ENCODE measurements at regions of chr10 and their contacts with region 1.

Region 1: DNA sequence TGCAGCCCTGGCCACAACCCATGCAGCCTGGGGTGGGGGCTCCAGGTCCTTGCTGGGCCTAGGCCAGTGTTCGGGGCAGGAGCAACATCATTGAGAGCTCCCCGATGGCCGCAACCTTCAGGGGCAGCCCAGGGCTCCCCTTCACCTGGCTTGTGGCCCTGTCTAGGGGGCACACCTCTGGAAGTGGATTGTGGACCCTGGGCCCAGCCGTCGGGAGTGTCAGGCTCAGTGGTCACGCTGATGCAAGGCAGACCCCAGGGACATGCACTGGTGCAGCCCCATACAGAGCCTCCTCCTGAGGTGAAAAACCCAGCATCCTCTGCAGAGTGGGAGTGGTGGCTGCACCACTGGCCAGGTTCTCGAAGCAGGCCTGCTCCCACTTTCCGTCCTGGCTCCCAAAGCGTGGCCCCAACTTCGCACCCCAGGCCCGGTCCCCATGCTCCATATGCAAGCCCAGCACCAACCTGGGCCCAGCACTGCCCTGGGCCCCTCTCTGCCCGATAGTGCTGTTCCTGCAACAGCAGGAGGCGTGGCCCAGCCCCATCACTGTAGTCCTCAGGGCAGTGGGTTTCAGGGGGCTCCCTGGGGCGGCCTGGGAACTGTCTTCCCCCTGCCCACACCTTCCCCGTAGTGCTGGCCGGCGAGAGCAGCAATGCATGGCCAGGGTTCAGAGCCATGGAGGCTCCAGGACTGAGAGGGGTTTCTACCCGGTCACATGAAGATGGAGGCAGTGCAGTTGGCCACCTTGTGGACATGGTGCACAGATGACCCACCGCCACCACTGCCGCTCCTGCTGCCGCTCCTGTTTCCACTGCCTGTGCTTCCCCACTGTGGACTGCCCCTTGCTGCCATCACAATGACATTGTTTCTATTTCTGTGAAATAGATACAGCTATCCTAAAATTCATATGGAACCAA is 303.9 kb upstream of the NRG3 start:
- DNase-seq: no peak
- H3K4me3 ChIP-seq: no peak overlapping the region
- H3K27ac ChIP-seq: no peak overlapping the region
- H3K4me1 ChIP-seq: no peaks in the 10 kb centered on the region
- H3K27me3 ChIP-seq: no peaks in the 10 kb centered on the region
- CTCF ChIP-seq: no peak
- POLR2A ChIP-seq: no peak

Region 2: DNA sequence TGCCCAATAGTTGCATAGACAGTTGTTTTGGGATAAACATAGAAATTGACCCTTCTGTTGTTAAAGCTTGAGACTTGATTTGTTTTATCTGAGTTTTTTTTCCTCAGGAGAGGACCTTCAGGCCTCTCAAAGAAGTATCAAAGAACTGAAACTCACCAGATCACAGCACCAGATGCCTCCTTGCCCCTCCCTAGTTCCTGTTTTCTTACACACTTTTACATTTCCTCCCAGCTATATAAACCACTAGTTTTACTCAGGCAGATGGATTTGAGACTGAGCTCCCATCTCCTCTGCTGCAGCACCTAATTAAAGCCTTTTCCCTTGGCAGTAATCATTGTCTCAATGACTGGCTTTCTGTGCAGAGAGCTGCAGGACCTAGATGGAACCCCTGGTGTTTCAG is 153.3 kb after region 1 on chr10:
- intact Hi-C with region 1: no loop called
- DNase-seq: no peak
- H3K4me3 ChIP-seq: no peak overlapping the region
- H3K27ac ChIP-seq: no peak overlapping the region
- H3K4me1 ChIP-seq: no peaks in the 10 kb centered on the region
- H3K27me3 ChIP-seq: no peaks in the 10 kb centered on the region
- CTCF ChIP-seq: no peak
- POLR2A ChIP-seq: no peak

Region 3: DNA sequence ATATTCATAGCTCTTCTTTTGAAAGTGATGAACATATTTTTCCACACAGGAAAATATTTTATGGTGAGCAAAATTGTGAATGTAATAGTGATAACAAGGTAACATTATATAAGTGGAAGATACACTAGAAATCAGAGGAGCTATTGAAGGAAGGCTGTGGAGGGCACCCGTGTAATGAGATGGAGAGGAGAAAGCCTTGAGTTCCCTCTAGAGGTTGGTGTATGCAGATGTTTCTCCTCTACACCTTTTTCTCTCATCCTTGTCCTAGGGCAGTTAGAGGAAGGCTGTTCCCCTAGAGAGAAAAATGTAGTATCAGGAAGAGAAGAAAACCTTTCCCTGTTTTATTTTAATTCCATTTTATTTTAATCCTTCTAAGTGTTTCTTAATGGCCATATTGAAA is 249.3 kb after region 1 on chr10:
- intact Hi-C with region 1: no loop called
- DNase-seq: no peak
- H3K4me3 ChIP-seq: no peak overlapping the region
- H3K27ac ChIP-seq: no peak overlapping the region
- H3K4me1 ChIP-seq: no peaks in the 10 kb centered on the region
- H3K27me3 ChIP-seq: no peaks in the 10 kb centered on the region
- CTCF ChIP-seq: no peak
- POLR2A ChIP-seq: no peak

Region 4: GRCh38 chr10:81909453-81909852 is 338.3 kb after region 1 on chr10:
- intact Hi-C with region 1: loop called (anchors 10 kb)
- DNase-seq: no peak
- H3K4me3 ChIP-seq: no peak overlapping the region
- H3K27ac ChIP-seq: no peak overlapping the region
- H3K4me1 ChIP-seq: no peaks in the 10 kb centered on the region
- H3K27me3 ChIP-seq: no peaks in the 10 kb centered on the region
- CTCF ChIP-seq: no peak
- POLR2A ChIP-seq: no peak

Measured in vagina (tissue), 2 donors.